Activated naive CD4-positive, alpha-beta T cell treated with anti-CD3 and anti-CD28 coated beads for 36 hours (primary cell): ENCODE measurements at regions of chr20 and their contacts with region 1.

Region 1: DNA sequence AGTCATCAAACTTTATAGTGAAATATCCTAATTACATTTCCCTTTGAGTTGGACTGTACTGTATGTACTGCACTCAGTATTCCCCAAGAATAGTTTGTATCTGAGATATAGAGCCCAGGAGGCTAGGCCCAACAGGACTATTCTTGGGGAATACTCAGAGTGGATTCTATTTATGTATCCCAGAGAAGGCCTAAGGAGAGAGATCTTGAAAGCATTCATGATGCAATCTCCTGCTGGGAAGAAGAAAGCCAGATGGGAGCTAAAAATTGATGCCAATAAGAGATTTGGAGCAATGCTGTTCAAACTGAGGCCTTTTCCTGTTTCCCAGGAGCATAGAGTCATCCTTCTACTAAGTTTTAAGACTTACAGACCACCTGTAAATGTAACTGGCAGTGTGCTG is 452.1 kb upstream of the PLCB4 start:
- DNase-seq: no peak
- H3K4me3 Mint-ChIP-seq: no peak overlapping the region
- H3K27ac Mint-ChIP-seq: no peak overlapping the region
- H3K4me1 Mint-ChIP-seq: no peaks in the 10 kb centered on the region
- H3K27me3 Mint-ChIP-seq: no peaks in the 10 kb centered on the region

Region 2: DNA sequence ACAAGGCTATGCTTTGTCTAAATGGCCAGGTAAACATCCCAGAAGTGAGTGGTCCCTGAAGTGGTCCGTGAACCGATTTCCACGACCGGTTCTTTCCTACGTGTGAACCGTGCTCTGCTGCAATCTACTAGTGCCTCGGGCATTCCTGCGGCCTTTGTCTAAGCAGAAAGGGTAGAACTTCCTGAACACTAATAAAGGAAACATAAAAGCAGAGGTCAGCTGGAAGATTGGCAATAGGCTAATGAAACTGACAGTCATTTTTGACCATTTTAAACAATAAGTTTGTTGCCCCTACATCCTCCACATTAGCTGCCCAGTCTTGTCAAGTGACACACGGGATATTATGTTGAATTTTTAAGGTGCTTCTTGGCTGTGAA is 74.7 kb before region 1 on chr20:
- CTCF ChIA-PET with region 1: no interaction called
- intact Hi-C with region 1: loop called (anchors 2 kb)
- DNase-seq: no peak
- H3K4me3 Mint-ChIP-seq: no peak overlapping the region
- H3K27ac Mint-ChIP-seq: no peak overlapping the region
- H3K4me1 Mint-ChIP-seq: no peaks in the 10 kb centered on the region
- H3K27me3 Mint-ChIP-seq: no peaks in the 10 kb centered on the region